PC-3 (cell line): ENCODE measurements at regions of chr10 and their contacts with region 1.

Region 1: DNA sequence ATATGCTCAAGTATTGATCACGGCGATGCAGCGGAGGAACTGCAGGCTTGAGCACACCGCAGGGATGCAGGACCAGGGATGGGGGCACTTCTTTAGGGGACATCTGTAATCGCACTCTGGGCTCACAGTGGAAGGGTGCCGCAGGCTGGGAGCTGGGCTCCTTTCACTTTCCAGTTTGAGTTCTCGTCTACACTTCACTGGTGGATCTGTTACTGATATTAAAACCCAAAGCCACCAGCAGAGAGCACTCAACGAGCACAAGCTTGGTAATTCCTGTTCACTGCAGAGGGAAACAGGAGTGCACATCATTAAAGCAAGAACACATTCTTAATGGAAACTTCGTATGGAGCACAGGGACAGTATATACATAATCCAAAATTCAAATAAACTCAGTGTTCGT is 91.3 kb downstream of the PARD3 start:
- DNase-seq: peak; percentile 96
- ATAC-seq: peak; percentile 70
- H3K4me3 ChIP-seq: peak overlapping the region; percentile 38
- H3K27ac ChIP-seq: no peak overlapping the region
- H3K4me1 ChIP-seq: peaks cover 52% of the 10 kb centered on the region
- H3K27me3 ChIP-seq: no peaks in the 10 kb centered on the region
- CTCF ChIP-seq: peak; percentile 99

Region 2: GRCh38 chr10:34364253-34365037 is 359.3 kb before region 1 on chr10:
- CTCF ChIA-PET with region 1: no interaction called
- POLR2A ChIA-PET with region 1: no interaction called
- intact Hi-C with region 1: no loop called
- DNase-seq: peak; percentile 76
- ATAC-seq: 0 out of 2 replicates have a peak, but pooled peaks have one; percentile 13
- H3K4me3 ChIP-seq: no peak overlapping the region
- H3K27ac ChIP-seq: no peak overlapping the region
- H3K4me1 ChIP-seq: peaks cover 8% of the 10 kb centered on the region
- H3K27me3 ChIP-seq: no peaks in the 10 kb centered on the region
- CTCF ChIP-seq: no peak

Region 3: DNA sequence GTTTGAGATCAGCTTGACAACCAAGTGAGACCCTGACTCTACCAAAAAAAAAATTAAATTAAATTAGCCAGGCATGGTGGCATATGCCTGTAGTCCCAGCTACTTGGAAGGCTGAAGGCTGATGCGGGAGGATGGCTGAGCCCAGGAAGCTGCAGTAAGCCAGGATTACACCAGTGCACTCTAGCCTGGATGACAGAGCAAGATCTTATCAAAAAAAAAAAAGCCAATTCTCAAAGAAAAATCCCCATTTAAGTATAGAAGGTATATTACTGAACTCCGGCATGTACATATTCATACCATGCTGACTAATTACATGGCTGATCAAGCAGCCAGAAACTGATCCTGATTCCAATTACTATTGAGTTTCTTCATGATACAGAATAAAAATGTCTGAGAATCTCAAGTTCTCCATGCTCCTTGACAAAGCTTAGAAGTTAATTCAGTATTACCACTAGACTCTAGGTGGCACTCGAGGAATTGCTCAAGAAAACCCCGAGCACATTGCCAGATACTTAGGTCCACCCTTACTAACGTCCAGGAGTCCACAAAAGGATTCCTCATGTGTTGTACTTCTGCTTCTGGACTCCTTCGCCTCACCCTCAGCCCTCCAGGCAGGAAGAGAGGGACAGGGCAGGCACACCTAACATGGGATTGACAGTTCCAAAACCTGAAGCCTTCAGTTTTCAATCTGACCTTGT is 57.6 kb before region 1 on chr10:
- CTCF ChIA-PET with region 1: interaction called, 20 read pairs
- POLR2A ChIA-PET with region 1: no interaction called
- intact Hi-C with region 1: loop called (anchors 1 kb)
- DNase-seq: peak; percentile 100
- ATAC-seq: peak; percentile 89
- H3K4me3 ChIP-seq: peak overlapping the region; percentile 19; the same call in 1 of the 2 replicates
- H3K27ac ChIP-seq: peak overlapping the region; percentile 62
- H3K4me1 ChIP-seq: peaks cover 22% of the 10 kb centered on the region
- H3K27me3 ChIP-seq: no peaks in the 10 kb centered on the region
- CTCF ChIP-seq: peak; percentile 100

Region 4: DNA sequence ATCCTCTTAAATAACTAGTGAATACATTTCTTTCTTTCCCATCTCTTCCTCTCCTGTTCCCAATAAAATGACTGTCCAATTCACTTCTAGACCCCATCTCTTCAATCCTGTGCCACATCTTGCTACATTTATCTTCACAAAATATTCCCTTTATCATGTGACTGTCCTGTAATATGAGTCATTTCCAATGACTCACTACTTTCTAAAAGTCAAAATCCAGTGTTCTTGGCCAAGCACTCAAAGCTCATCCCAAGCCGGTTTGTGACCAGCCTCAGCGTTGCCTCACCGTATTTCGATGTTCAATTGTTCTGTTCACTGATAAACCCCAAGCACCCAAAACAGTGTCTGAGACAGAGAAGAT is 13.4 kb before region 1 on chr10:
- CTCF ChIA-PET with region 1: interaction called, 7 read pairs
- POLR2A ChIA-PET with region 1: no interaction called
- intact Hi-C with region 1: loop called (anchors 1 kb)
- DNase-seq: peak; percentile 100
- ATAC-seq: peak; percentile 83
- H3K4me3 ChIP-seq: peak overlapping the region; percentile 15; the same call in 1 of the 2 replicates
- H3K27ac ChIP-seq: peak overlapping the region; percentile 25
- H3K4me1 ChIP-seq: peaks cover 62% of the 10 kb centered on the region
- H3K27me3 ChIP-seq: no peaks in the 10 kb centered on the region
- CTCF ChIP-seq: no peak

Region 5: DNA sequence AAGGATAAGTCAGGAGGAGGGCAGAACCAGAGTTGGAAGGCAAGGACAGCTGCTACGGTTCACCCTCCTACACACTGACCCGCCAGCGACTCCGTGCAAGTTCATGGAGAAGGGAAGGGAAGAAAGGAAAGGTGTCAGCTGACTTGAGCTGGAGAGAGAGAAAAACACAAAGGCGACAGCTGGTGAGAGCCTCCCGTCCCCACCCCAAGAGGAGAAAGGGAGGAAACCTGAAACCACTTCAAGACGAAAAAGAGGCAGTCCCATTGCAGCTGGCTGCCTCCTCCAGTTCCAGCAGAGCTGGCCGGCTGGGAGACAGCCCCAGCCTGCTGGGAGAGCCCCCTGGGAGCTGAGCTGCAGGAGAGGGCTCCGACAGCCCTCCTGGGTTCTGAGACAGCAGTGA is 16.2 kb after region 1 on chr10:
- CTCF ChIA-PET with region 1: no interaction called
- POLR2A ChIA-PET with region 1: no interaction called
- intact Hi-C with region 1: no loop called
- DNase-seq: no peak
- ATAC-seq: peak; percentile 41; the same call in 1 of the 2 replicates
- H3K4me3 ChIP-seq: no peak overlapping the region
- H3K27ac ChIP-seq: no peak overlapping the region
- H3K4me1 ChIP-seq: no peaks in the 10 kb centered on the region
- H3K27me3 ChIP-seq: no peaks in the 10 kb centered on the region
- CTCF ChIP-seq: no peak

Region 6: GRCh38 chr10:34815185-34816084 is 91.7 kb after region 1 on chr10 and contains the start of gene PARD3:
- CTCF ChIA-PET with region 1: interaction called, 31 read pairs
- POLR2A ChIA-PET with region 1: interaction called, 3 read pairs
- intact Hi-C with region 1: loop called (anchors 1 kb)
- DNase-seq: peak; percentile 91
- ATAC-seq: peak; percentile 64
- H3K4me3 ChIP-seq: peak within 1 kb of the TSS; percentile 72
- H3K27ac ChIP-seq: peak within 1 kb of the TSS; percentile 13; the same call in 1 of the 2 replicates
- H3K4me1 ChIP-seq: peaks cover 36% of the 10 kb centered on the region
- H3K27me3 ChIP-seq: no peaks in the 10 kb centered on the region
- CTCF ChIP-seq: no peak
- total RNA-seq, gene PARD3: 149 and 154 TPM in 2 replicates

Region 7: GRCh38 chr10:34884272-34884952 is 160.7 kb after region 1 on chr10:
- CTCF ChIA-PET with region 1: no interaction called
- POLR2A ChIA-PET with region 1: no interaction called
- intact Hi-C with region 1: loop called (anchors 5 kb)
- DNase-seq: peak; percentile 66
- ATAC-seq: no peak
- H3K4me3 ChIP-seq: no peak overlapping the region
- H3K27ac ChIP-seq: no peak overlapping the region
- H3K4me1 ChIP-seq: peaks cover 25% of the 10 kb centered on the region
- H3K27me3 ChIP-seq: no peaks in the 10 kb centered on the region
- CTCF ChIP-seq: no peak

Region 8: DNA sequence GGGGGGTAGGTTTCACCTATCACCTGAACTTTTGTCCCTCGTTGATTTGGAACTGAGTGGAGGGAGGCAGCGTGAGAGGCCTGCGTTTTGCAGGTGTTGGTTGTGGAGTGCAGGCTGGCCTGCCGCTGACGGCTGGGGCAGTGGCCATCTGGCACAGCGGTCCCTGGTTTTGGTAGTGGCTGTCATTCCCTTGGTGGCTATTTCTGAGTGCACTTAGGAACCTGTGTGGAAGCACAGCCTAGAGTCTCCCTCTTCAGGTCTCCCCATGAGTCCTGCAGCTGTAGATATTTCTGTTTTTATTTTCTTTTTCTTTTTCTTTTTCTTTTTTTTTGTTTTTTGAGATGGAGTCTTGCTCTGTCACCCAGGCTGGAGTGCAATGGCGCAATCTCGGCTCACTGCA is 237.2 kb after region 1 on chr10:
- CTCF ChIA-PET with region 1: interaction called, 16 read pairs
- POLR2A ChIA-PET with region 1: interaction called, 3 read pairs
- intact Hi-C with region 1: loop called (anchors 1 kb)
- DNase-seq: peak; percentile 66
- ATAC-seq: peak; percentile 83
- H3K4me3 ChIP-seq: no peak overlapping the region
- H3K27ac ChIP-seq: no peak overlapping the region
- H3K4me1 ChIP-seq: 0 out of 2 replicates have a peak, but pooled peaks cover 3% of the 10 kb centered on the region
- H3K27me3 ChIP-seq: no peaks in the 10 kb centered on the region
- CTCF ChIP-seq: peak; percentile 79